ENCODE measurements at regions of chr17 and their contacts with region 1.

Region 1: DNA sequence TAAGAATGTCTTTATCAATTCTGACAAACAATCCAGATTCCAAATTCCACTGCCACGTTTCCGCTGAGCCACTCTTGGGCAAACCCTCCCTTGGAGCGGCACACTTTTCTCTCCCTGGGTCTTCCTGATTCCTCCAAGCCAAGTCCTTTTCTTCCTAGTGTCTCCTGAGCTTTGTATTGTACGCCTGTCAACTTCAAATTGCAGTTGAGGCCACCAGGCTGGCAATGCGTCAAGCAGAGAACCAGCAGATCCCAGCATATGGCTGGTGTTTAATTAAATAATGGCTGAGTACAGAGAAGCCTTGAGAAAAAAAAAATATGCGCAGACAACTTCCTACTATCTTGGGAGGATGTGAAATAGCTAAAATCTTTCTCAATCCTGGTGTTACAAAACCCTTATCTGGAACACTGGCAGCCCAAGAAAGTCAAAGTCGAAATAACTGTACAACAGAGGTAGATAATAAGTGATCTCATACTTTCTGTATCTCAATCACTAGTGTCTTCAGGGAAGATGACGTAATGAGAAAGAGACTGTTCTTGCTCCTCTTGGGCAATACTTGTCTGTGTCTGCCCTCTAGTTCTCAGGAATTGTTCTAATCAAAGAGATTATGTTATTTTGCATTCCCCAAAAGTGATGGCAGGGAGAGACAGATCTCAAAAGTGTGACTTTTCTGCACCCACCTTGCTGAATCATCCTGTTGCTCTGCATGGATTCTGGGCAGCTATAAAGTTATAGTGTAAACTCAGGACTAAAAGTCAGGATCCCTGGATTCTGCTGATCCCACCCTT is 15.0 kb downstream of the SMIM36 start:
- DNase-seq: peak; percentile 67 to 93
- ATAC-seq: peak; percentile 81 to 93
- H3K4me3 ChIP-seq: peak overlapping the region; percentile 4; the same call in 1 of the 3 replicates
- H3K27ac ChIP-seq: peak overlapping the region; percentile 85 to 89
- H3K4me1 ChIP-seq: peaks cover 51% of the 10 kb centered on the region
- CTCF ChIP-seq: peak; percentile 22; the same call in 1 of the 3 replicates
- EP300 ChIP-seq: peak; percentile 95 to 96; a peak in 4 of 5 replicates
- POLR2A ChIP-seq: no peak
- RAD21 ChIP-seq: peak; percentile 25 to 80; a peak in 4 of 5 replicates

Region 2: GRCh38 chr17:54968262-54968987 is 527.9 kb before region 1 on chr17 and contains the starts of genes COX11 and STXBP4:
- CTCF ChIA-PET with region 1: no interaction called
- POLR2A ChIA-PET with region 1: interaction called, 11 read pairs
- DNase-seq: peak; percentile 91 to 98
- ATAC-seq: peak; percentile 93 to 99
- H3K4me3 ChIP-seq: peak within 1 kb of the TSS; percentile 76
- H3K27ac ChIP-seq: peak within 1 kb of the TSS; percentile 88 to 94
- H3K4me1 ChIP-seq: peaks cover 32% of the 10 kb centered on the region
- CTCF ChIP-seq: no peak; the same call in 1 of the 3 replicates
- EP300 ChIP-seq: no peak
- POLR2A ChIP-seq: peak; percentile 93
- RAD21 ChIP-seq: no peak; a peak in 1 of 5 replicates
- polyA plus RNA-seq, gene COX11: 77.4 and 95.4 TPM in 2 replicates
- polyA plus RNA-seq, gene STXBP4: 13.1 and 16.0 TPM in 2 replicates

Region 3: DNA sequence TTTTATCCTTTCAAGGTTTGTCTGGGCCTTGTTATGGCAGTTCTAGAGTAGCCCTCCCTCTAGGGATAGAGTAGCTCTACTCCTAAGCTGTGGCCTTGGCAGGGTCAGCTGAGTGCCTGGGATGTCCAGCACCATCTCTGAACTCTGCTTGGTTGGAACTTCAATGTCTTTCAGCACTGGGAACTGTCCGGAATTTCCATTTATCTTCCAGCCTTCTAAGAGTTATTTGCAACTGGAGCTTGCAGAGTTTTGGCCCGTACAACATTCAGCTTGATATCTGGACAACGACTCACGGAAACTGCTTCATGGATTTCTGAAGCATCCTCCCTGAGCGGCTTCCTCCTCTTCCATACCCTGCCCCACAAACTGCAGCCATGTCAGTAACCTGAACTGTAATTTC is 97.6 kb before region 1 on chr17:
- CTCF ChIA-PET with region 1: no interaction called
- POLR2A ChIA-PET with region 1: no interaction called
- DNase-seq: no peak
- ATAC-seq: peak in 1 of 2 experiments; percentile 34; a peak in 2 of 6 replicates
- H3K4me3 ChIP-seq: no peak overlapping the region
- H3K27ac ChIP-seq: no peak overlapping the region
- H3K4me1 ChIP-seq: peaks cover 23% of the 10 kb centered on the region
- CTCF ChIP-seq: no peak
- EP300 ChIP-seq: no peak
- POLR2A ChIP-seq: no peak
- RAD21 ChIP-seq: no peak

Region 4: DNA sequence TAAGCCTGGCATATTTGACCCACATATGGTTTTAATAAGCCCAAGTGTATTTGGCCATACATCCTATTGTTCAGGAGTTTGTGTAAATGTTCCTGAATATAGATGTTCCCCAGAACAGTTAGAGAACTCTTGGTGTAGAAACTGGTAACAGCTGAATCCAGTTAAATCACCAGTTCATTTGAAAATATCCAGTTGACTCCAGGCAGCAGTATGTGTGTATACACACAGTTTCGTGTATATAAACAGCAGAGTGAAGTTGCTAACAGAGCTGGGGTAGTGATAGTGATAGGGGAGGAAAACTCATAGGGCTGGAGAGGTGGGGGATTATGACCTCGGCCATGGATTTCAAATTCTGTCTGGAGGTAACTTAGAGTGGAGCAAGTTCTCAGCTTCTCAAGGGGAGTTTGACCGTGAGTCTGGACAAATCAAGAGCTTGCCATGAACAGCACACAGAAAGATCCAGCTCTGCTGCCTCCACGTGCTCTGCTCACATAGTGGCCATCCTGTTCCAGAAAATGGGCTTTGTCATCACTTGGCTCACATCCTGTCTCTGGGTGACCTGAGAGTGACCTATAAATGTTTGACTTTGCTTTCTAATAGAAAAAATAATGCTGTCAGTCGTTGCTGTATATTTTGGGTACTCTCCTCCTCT is 44.0 kb before region 1 on chr17:
- CTCF ChIA-PET with region 1: interaction called, 5 read pairs
- POLR2A ChIA-PET with region 1: interaction called, 12 read pairs
- DNase-seq: peak; percentile 50 to 94
- ATAC-seq: peak; percentile 64 to 65
- H3K4me3 ChIP-seq: no peak overlapping the region
- H3K27ac ChIP-seq: peak overlapping the region; percentile 83 to 88
- H3K4me1 ChIP-seq: peaks cover 81% of the 10 kb centered on the region
- CTCF ChIP-seq: no peak
- EP300 ChIP-seq: no peak; a peak in 1 of 5 replicates
- POLR2A ChIP-seq: no peak
- RAD21 ChIP-seq: peak; percentile 20 to 37; a peak in 4 of 5 replicates

Measured in A549 (cell line).